B cell (primary cell): ENCODE measurements at regions of chr6 and their contacts with region 1.

Region 1: DNA sequence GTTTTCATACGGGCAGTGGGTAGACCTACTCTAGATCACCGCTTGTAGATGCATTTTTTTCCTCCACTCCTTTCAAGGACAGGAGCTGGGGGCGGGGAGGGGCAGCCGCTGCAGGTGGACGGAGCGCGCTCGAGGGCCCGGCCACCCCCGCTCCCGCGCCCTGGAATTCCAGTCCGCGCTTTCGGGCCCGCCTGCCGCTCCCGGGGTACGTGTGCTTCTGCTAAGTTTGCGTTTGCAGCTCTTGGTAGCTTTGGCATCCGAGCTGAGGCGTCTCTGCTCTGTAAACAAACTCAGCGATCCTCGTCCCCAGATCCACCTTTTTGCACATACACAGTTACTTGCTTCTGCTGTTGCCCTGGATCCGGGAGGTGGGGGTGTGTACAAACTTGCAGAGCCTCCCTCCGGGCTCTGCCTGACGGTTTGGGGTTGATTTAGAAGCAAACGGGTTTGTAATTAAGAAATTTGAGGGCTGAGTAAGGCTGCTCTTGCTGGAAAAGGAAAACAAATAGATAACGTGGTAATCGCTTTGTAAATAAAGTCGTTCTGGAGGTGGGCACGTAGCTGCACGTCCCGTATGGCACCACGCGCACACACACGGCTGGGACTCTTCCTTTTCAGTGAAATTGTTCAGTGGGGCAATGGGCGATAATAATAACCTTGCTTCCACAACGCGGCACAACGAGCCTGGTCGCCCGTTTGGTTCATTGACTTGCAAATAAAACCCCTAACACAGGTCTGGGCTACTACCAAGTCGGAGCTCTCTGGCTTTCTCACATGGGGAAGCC is 976 bp upstream of the CITED2 start:
- DNase-seq: peak; percentile 91
- ATAC-seq: peak; percentile 53
- H3K4me3 ChIP-seq: peak overlapping the region; percentile 91 to 99 (median 97)
- H3K4me3 Mint-ChIP-seq: peak overlapping the region; percentile 100
- H3K27ac ChIP-seq: peak overlapping the region; percentile 73 to 81
- H3K27ac Mint-ChIP-seq: peak overlapping the region; percentile 100
- H3K4me1 ChIP-seq: peaks cover 9 to 17% of the 10 kb centered on the region in 2 donors
- H3K4me1 Mint-ChIP-seq: peaks cover 23% of the 10 kb centered on the region
- H3K27me3 ChIP-seq: no peaks in the 10 kb centered on the region
- H3K27me3 Mint-ChIP-seq: no peaks in the 10 kb centered on the region
- CTCF ChIP-seq: no peak

Region 2: DNA sequence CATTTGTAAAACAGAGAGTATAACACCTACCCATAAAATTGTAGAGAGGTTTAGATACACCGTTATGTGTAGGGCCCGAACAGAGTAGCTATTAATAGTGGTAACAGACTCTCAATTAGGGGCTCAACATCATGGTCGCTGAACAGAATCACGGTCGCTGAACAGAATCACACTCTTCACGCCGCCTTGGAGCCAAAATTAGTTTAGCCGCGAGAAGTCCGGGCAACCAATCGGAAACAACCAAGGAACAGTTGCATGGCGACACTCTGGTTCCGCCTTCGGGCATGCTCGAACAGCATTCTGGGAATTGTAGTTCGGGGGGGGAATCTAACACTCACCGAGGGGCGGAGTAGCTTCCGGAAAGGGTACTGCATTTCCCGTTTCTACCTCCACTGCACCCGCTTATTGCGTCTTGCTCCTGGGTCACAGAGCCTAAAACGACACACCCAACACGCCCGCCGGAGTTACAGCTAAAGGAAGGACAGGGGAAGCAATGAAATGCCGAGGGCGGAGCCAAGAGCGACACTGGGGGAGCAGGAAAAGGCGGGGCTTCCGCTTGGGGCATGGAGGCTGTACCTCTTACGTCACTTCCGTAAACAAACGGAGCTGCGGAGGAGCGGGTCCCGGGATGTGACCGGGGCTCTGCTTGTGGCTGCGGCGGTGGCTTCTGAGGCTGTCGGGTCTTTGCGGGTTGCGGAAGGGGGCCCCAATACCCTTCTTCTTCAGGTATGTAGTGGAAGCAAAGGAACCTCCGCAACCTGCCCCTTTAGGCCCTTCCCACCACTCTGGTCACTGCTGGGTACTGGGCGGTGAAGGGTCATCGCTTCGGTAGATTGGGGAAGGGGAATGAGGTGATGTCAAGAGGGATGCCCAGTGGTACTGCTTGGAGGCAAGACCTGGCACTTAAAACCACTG is 602.0 kb before region 1 on chr6 and contains the start of gene CCDC28A:
- CTCF ChIA-PET with region 1: interaction called, 4 read pairs
- POLR2A ChIA-PET with region 1: interaction called, 9 read pairs
- intact Hi-C with region 1: loop called (anchors 1 kb)
- DNase-seq: peak; percentile 97
- ATAC-seq: peak; percentile 84
- H3K4me3 ChIP-seq: peak within 1 kb of the TSS; percentile 83 to 98 (median 86)
- H3K4me3 Mint-ChIP-seq: peak within 1 kb of the TSS; percentile 99
- H3K27ac ChIP-seq: peak within 1 kb of the TSS; percentile 92 to 97
- H3K27ac Mint-ChIP-seq: peak within 1 kb of the TSS; percentile 99
- H3K4me1 ChIP-seq: peaks cover 21 to 28% of the 10 kb centered on the region in 2 donors
- H3K4me1 Mint-ChIP-seq: peaks cover 32% of the 10 kb centered on the region
- H3K27me3 ChIP-seq: no peaks in the 10 kb centered on the region
- H3K27me3 Mint-ChIP-seq: no peaks in the 10 kb centered on the region
- CTCF ChIP-seq: no peak
- total RNA-seq, gene CCDC28A: 26.3 and 26.9 TPM in 2 replicates

Region 3: GRCh38 chr6:138987640-138988468 is 387.6 kb before region 1 on chr6 and contains the start of gene REPS1:
- CTCF ChIA-PET with region 1: interaction called, 10 read pairs
- POLR2A ChIA-PET with region 1: no interaction called
- intact Hi-C with region 1: loop called (anchors 1 kb)
- DNase-seq: peak; percentile 91
- ATAC-seq: peak; percentile 91
- H3K4me3 ChIP-seq: peak within 1 kb of the TSS; percentile 52 to 97 (median 87)
- H3K4me3 Mint-ChIP-seq: peak within 1 kb of the TSS; percentile 87
- H3K27ac ChIP-seq: peak within 1 kb of the TSS; percentile 78 to 90
- H3K27ac Mint-ChIP-seq: peak within 1 kb of the TSS; percentile 95
- H3K4me1 ChIP-seq: peaks cover 23 to 26% of the 10 kb centered on the region in 2 donors
- H3K4me1 Mint-ChIP-seq: peaks cover 21% of the 10 kb centered on the region
- H3K27me3 ChIP-seq: no peaks in the 10 kb centered on the region
- H3K27me3 Mint-ChIP-seq: no peaks in the 10 kb centered on the region
- CTCF ChIP-seq: peak; percentile 98
- total RNA-seq, gene REPS1: 55.5 and 57.1 TPM in 2 replicates

Region 4: DNA sequence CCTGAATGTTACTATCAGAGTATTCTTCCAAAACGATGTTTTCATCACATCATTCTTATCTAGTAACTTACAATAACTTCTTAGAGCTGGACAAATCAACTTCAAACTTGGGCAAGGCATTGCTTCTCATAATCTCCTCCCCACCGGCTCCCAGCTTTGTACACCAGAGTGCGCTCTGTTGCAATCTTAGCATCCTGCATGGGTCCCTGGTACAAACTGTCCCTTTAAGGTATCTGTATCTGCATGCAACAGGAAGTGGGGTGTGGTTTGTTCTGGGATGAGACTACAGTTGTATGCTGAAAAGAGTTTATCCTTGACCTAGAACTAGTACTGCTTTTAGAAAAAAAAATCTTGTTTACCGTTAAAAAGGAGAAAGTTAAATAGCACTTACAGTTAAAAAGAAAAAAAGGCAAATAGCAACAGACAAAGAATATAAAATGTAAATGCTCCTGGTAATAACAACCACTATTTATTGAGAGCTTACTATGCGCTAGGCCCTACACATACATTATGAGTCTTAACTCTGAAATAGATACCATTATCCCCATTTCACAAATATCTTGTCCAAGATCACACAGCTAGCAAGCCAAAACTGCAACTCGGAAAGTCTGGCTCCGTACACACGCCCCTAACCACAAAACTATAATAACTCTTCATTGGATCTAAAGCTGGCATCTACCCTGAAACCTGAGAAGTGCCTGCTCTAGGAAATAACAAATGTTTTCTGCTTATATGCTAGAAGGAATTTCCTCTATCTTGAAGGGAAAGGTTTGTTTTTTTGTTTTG is 250.3 kb before region 1 on chr6:
- CTCF ChIA-PET with region 1: interaction called, 12 read pairs
- POLR2A ChIA-PET with region 1: interaction called, 4 read pairs
- intact Hi-C with region 1: loop called (anchors 1 kb)
- DNase-seq: peak; percentile 84
- ATAC-seq: peak; percentile 100
- H3K4me3 ChIP-seq: peak overlapping the region in 2 of 5 experiments; percentile 13 to 18
- H3K4me3 Mint-ChIP-seq: peak overlapping the region; percentile 76
- H3K27ac ChIP-seq: peak overlapping the region; percentile 58 to 76
- H3K27ac Mint-ChIP-seq: peak overlapping the region; percentile 93
- H3K4me1 ChIP-seq: peaks cover 20 to 22% of the 10 kb centered on the region in 2 donors
- H3K4me1 Mint-ChIP-seq: peaks cover 41% of the 10 kb centered on the region
- H3K27me3 ChIP-seq: no peaks in the 10 kb centered on the region
- H3K27me3 Mint-ChIP-seq: no peaks in the 10 kb centered on the region
- CTCF ChIP-seq: peak; percentile 73

Region 5: GRCh38 chr6:139291813-139292619 is 83.4 kb before region 1 on chr6 and contains the start of gene TXLNB:
- CTCF ChIA-PET with region 1: interaction called, 12 read pairs
- POLR2A ChIA-PET with region 1: interaction called, 5 read pairs
- intact Hi-C with region 1: no loop called
- DNase-seq: peak; percentile 77
- ATAC-seq: peak; percentile 49
- H3K4me3 ChIP-seq: peak within 1 kb of the TSS; percentile 17 to 66 (median 34)
- H3K4me3 Mint-ChIP-seq: peak within 1 kb of the TSS; percentile 84
- H3K27ac ChIP-seq: peak within 1 kb of the TSS; percentile 93
- H3K27ac Mint-ChIP-seq: peak within 1 kb of the TSS; percentile 95
- H3K4me1 ChIP-seq: peaks cover 41 to 49% of the 10 kb centered on the region in 2 donors
- H3K4me1 Mint-ChIP-seq: peaks cover 73% of the 10 kb centered on the region
- H3K27me3 ChIP-seq: no peaks in the 10 kb centered on the region
- H3K27me3 Mint-ChIP-seq: no peaks in the 10 kb centered on the region
- CTCF ChIP-seq: no peak
- total RNA-seq, gene TXLNB: 3.3 and 3.6 TPM in 2 replicates

Region 6: GRCh38 chr6:139927236-139927635 is 551.8 kb after region 1 on chr6:
- CTCF ChIA-PET with region 1: interaction called, 10 read pairs
- POLR2A ChIA-PET with region 1: no interaction called
- intact Hi-C with region 1: loop called (anchors 2 kb)
- DNase-seq: peak; percentile 28
- ATAC-seq: no peak
- H3K4me3 ChIP-seq: no peak overlapping the region
- H3K4me3 Mint-ChIP-seq: no peak overlapping the region
- H3K27ac ChIP-seq: no peak overlapping the region
- H3K27ac Mint-ChIP-seq: no peak overlapping the region
- H3K4me1 ChIP-seq: no peaks in the 10 kb centered on the region
- H3K4me1 Mint-ChIP-seq: no peaks in the 10 kb centered on the region
- H3K27me3 ChIP-seq: no peaks in the 10 kb centered on the region
- H3K27me3 Mint-ChIP-seq: peaks cover 9% of the 10 kb centered on the region
- CTCF ChIP-seq: peak; percentile 19